ENCODE measurements at regions of chr11 and their contacts with region 1.

Region 1: GRCh38 chr11:58742981-58743880 is 11.5 kb upstream of the GLYAT start:
- DNase-seq: no peak
- ATAC-seq: no peak
- H3K4me3 ChIP-seq: no peak overlapping the region
- H3K4me1 ChIP-seq: no peaks in the 10 kb centered on the region
- CTCF ChIP-seq: no peak

Region 2: DNA sequence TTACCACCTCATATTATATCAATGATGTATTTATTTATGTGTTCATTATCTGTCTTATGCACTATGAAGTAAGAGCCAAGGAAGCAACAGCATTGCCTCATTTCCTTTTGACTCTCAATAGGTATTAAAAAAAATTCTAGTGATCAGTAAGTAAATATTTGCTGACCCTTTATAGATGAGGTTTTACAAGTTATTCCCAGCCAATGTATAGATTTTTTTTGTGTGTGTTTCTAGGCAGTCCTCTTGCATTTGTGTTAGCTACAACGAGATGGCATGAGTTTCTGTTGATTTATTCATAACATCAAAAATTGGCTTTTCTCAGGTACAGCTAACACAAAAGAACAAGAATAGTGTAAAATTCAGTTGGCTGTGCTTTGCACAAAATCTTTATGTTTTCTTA is 544.0 kb before region 1 on chr11:
- intact Hi-C with region 1: no loop called
- DNase-seq: no peak
- ATAC-seq: no peak
- H3K4me3 ChIP-seq: no peak overlapping the region
- H3K4me1 ChIP-seq: no peaks in the 10 kb centered on the region
- CTCF ChIP-seq: no peak

Region 3: DNA sequence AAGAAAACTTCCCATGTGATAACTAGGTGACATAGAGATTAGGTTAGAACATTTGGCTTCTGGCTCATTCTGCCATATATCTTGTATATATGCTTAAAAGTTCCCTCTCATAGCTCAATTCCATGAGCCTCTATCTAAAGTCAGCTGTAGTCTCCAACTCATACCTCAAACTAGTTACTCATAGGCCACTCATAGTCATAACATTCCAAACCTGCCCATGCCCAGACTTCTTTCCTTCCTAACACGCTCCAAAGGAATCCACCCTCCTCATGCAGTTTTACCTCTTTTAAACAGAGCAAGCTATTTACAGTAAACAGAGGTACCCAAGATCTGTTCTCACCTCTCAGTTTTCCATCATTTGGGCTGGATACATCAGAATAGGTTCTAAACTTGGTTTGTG is 61.8 kb after region 1 on chr11:
- intact Hi-C with region 1: loop called in 1 of 2 experiments (anchors 10 kb)
- DNase-seq: no peak
- ATAC-seq: no peak
- H3K4me3 ChIP-seq: no peak overlapping the region
- H3K4me1 ChIP-seq: no peaks in the 10 kb centered on the region
- CTCF ChIP-seq: no peak

Region 4: GRCh38 chr11:58832056-58832645 is 88.9 kb after region 1 on chr11:
- intact Hi-C with region 1: no loop called
- DNase-seq: peak in 1 of 3 donors; percentile 38
- ATAC-seq: peak; percentile 98
- H3K4me3 ChIP-seq: no peak overlapping the region
- H3K4me1 ChIP-seq: no peaks in the 10 kb centered on the region
- CTCF ChIP-seq: no peak

Measured in mucosa of descending colon (tissue), 3 donors.